GM23248 (cell line): ENCODE measurements at regions of chr6 and their contacts with region 1.

Region 1: GRCh38 chr6:44096612-44097011 is 30.6 kb downstream of the MRPL14 start:
- DNase-seq: peak; percentile 85
- H3K4me3 ChIP-seq: no peak overlapping the region
- H3K27ac ChIP-seq: no peak overlapping the region
- H3K4me1 ChIP-seq: no peaks in the 10 kb centered on the region
- H3K27me3 ChIP-seq: no peaks in the 10 kb centered on the region

Region 2: DNA sequence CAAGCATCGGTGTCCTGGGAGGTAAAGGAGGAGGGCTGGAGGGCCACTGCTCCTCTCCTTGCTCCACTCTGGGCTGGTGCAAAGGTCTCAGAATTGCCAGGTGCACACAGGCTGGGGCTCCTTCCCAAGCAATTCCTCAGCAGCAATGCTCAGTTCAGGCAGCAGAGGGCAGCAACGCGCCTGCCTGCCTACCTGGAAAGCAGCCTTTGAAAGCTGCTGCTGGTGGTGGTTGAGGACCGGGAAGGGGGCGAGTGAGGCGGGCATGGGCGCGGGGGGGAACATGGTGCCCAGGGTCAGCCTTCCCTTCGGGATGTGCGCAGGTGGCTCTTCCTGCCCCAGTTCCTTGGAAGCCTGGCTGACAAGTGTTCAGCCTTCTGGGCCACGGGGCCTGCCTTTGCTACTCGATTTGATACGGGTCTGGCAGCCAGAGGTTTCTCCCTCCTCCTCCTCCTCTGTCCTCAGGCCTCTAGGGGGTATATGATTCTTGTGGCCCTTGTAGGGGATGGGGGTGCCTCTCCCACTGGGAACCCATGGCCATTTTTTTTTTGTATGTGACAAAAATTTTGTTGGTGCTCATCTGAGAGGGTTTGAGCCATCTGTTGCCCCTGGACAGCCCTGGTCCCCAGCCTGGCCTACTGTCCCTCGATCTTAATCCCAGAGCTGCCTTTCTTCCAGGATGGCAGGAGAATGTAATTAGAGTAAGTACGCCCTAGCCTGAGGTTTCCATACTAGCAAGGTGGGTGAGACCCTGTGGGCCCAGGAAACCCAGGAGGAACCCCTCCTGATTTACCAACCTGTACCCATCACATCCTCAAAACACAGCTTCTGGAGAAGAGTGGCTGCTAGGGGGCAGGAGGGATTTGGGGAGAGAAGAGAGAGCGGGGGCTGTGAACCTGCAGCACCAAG is 429.1 kb before region 1 on chr6:
- in situ Hi-C with region 1: loop called (anchors 25 kb)
- DNase-seq: peak; percentile 72
- H3K4me3 ChIP-seq: no peak overlapping the region
- H3K27ac ChIP-seq: no peak overlapping the region
- H3K4me1 ChIP-seq: peaks cover 30% of the 10 kb centered on the region
- H3K27me3 ChIP-seq: no peaks in the 10 kb centered on the region

Region 3: DNA sequence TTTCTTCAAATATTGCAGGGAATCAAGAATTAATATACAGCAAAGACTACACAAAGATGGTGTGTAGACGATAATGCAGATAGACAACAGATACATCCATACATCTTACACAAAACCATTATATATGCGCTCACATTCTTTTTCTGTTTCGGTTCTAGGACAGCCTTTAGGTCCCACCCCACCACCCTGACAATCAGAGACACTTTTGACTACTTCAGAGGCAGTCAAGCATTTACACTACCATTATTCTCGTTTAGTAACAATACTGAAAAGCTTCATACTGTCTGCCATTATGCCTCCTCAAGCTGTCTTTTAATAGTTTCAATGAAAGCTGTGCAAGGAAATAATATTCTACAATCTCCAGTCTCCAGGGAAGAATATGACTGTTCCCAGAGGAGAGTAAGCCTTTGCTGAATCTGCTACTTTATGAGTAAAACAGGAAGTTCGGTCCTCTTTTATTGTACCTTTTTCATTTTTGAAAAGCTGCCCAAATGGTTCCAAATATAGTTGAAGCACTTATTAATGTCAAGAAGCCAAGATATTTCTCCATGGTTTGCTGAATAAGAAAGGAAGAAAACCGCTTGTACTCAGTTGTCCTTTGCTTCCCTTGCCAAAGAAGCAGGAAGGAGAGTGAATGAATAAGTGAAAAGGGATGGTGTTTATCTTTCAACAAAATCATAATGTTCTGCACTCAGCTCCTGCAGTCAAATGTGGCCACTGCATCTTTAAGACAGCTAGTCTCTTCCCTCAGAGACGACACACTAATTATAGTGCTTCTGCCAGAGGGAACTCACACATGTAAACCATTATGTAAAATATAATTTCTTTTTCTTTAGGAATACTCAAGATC is 759.2 kb after region 1 on chr6:
- in situ Hi-C with region 1: no loop called
- DNase-seq: peak; percentile 74
- H3K4me3 ChIP-seq: peak overlapping the region; percentile 12; the same call in 1 of the 2 replicates
- H3K27ac ChIP-seq: peak overlapping the region; percentile 7; the same call in 1 of the 2 replicates
- H3K4me1 ChIP-seq: peaks cover 24% of the 10 kb centered on the region
- H3K27me3 ChIP-seq: no peaks in the 10 kb centered on the region